ENCODE measurements at regions of chr13 and their contacts with region 1.

Region 1: DNA sequence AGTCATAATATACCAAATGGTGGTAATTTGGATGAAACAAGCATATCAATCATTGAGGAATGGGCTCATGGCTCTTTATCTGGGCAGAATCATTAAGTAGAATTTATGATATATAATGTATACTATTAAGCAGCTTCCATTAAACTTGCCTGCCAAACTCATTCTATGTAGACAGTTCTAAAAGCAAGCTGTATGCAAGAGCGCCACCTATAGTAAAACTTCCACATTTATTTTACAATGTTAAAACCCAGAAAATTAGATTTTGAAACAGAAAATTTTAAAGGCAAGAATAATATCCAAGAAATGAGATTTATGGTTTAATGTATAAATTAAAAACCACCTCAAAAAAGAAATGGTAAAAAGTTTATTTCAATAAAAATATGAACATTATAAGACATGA is 161.5 kb downstream of the MZT1 start:
- DNase-seq: no peak
- H3K4me3 ChIP-seq: no peak overlapping the region
- H3K27ac ChIP-seq: no peak overlapping the region
- H3K4me1 ChIP-seq: peaks cover 0 to 7% (median 3%) of the 10 kb centered on the region in 4 experiments; a peak in 3 of 7 replicates
- H3K27me3 ChIP-seq: no peaks in the 10 kb centered on the region
- CTCF ChIP-seq: peak in 2 of 3 experiments; percentile 44 to 48; a peak in 2 of 4 replicates
- EP300 ChIP-seq: no peak
- POLR2A ChIP-seq: no peak
- RAD21 ChIP-seq: peak; percentile 67 to 72

Region 2: GRCh38 chr13:72539925-72540324 is 26.0 kb before region 1 on chr13:
- CTCF ChIA-PET with region 1: interaction called, 11 read pairs
- POLR2A ChIA-PET with region 1: no interaction called
- DNase-seq: no peak
- H3K4me3 ChIP-seq: no peak overlapping the region
- H3K27ac ChIP-seq: no peak overlapping the region
- H3K4me1 ChIP-seq: peaks cover 0 to 3% (median 0%) of the 10 kb centered on the region in 4 experiments; a peak in 1 of 7 replicates
- H3K27me3 ChIP-seq: no peaks in the 10 kb centered on the region
- CTCF ChIP-seq: no peak
- EP300 ChIP-seq: no peak
- POLR2A ChIP-seq: no peak
- RAD21 ChIP-seq: no peak

Measured in H1 (cell line).